Heart right ventricle (tissue), 16 donors: ENCODE measurements at regions of chr1 and their contacts with region 1.

Region 1: GRCh38 chr1:26787706-26788514 is at the start of gene PIGV:
- DNase-seq: peak; percentile 87 to 92
- ATAC-seq: peak; percentile 86 to 92 (median 90)
- H3K4me3 ChIP-seq: peak within 1 kb of the TSS; percentile 57 to 83 (median 70)
- H3K27ac ChIP-seq: peak within 1 kb of the TSS; percentile 97 to 100 (median 99)
- H3K4me1 ChIP-seq: peaks cover 25 to 84% (median 74%) of the 10 kb centered on the region in 9 donors
- H3K27me3 ChIP-seq: no peaks in the 10 kb centered on the region
- CTCF ChIP-seq: peak in 3 of 9 donors; percentile 6 to 27 (median 24)
- total RNA-seq, gene PIGV: 2.7 to 7.5 (median 4.6) TPM

Region 2: GRCh38 chr1:26555550-26556510 is 232.1 kb before region 1 on chr1:
- intact Hi-C with region 1: no loop called
- DNase-seq: no peak
- ATAC-seq: peak in 2 of 8 donors; percentile 37 to 53
- H3K4me3 ChIP-seq: no peak overlapping the region
- H3K27ac ChIP-seq: no peak overlapping the region
- H3K4me1 ChIP-seq: peaks cover 0 to 25% (median 0%) of the 10 kb centered on the region in 9 donors
- H3K27me3 ChIP-seq: no peaks in the 10 kb centered on the region
- CTCF ChIP-seq: no peak

Region 3: GRCh38 chr1:26602378-26602959 is 185.4 kb before region 1 on chr1:
- intact Hi-C with region 1: loop called (anchors 1 to 2 kb)
- DNase-seq: peak in 1 of 2 donors; percentile 70
- ATAC-seq: peak in 3 of 8 donors; percentile 46 to 54 (median 52)
- H3K4me3 ChIP-seq: no peak overlapping the region
- H3K27ac ChIP-seq: no peak overlapping the region
- H3K4me1 ChIP-seq: peaks cover 0 to 8% (median 5%) of the 10 kb centered on the region in 9 donors
- H3K27me3 ChIP-seq: no peaks in the 10 kb centered on the region
- CTCF ChIP-seq: peak; percentile 77 to 95 (median 87)

Region 4: GRCh38 chr1:26695356-26696118 is 92.4 kb before region 1 on chr1 and contains the start of gene ARID1A:
- intact Hi-C with region 1: loop called in 9 of 10 experiments (anchors 1 to 10 kb)
- DNase-seq: peak; percentile 95 to 97
- ATAC-seq: peak; percentile 71 to 82 (median 76)
- H3K4me3 ChIP-seq: peak within 1 kb of the TSS; percentile 72 to 96 (median 92)
- H3K27ac ChIP-seq: peak within 1 kb of the TSS; percentile 93 to 99 (median 98)
- H3K4me1 ChIP-seq: peaks cover 14 to 73% (median 52%) of the 10 kb centered on the region in 9 donors
- H3K27me3 ChIP-seq: no peaks in the 10 kb centered on the region
- CTCF ChIP-seq: peak in 4 of 9 donors; percentile 3 to 39 (median 20)
- total RNA-seq, gene ARID1A: 33.6 to 62.5 (median 45.7) TPM

Region 5: GRCh38 chr1:26723013-26723991 is 64.6 kb before region 1 on chr1:
- intact Hi-C with region 1: loop called in 1 of 10 experiments (anchors 2 kb)
- DNase-seq: peak; percentile 74 to 95
- ATAC-seq: peak; percentile 97 to 99 (median 97)
- H3K4me3 ChIP-seq: peak overlapping the region in 6 of 10 donors; percentile 4 to 25 (median 7)
- H3K27ac ChIP-seq: peak overlapping the region in 9 of 10 donors; percentile 43 to 69 (median 62)
- H3K4me1 ChIP-seq: peaks cover 24 to 100% (median 94%) of the 10 kb centered on the region in 9 donors
- H3K27me3 ChIP-seq: no peaks in the 10 kb centered on the region
- CTCF ChIP-seq: peak in 1 of 9 donors; percentile 8

Region 6: GRCh38 chr1:26744075-26744959 is 43.6 kb before region 1 on chr1:
- intact Hi-C with region 1: loop called in 3 of 10 experiments (anchors 2 to 5 kb)
- DNase-seq: peak; percentile 56 to 92
- ATAC-seq: peak; percentile 93 to 98 (median 96)
- H3K4me3 ChIP-seq: peak overlapping the region in 5 of 10 donors; percentile 0 to 23 (median 15)
- H3K27ac ChIP-seq: peak overlapping the region; percentile 58 to 92 (median 78)
- H3K4me1 ChIP-seq: peaks cover 8 to 92% (median 88%) of the 10 kb centered on the region in 9 donors
- H3K27me3 ChIP-seq: no peaks in the 10 kb centered on the region
- CTCF ChIP-seq: no peak

Region 7: GRCh38 chr1:26768755-26769154 is 19.2 kb before region 1 on chr1:
- intact Hi-C with region 1: no loop called
- DNase-seq: peak in 1 of 2 donors; percentile 59
- ATAC-seq: peak in 6 of 8 donors; percentile 33 to 67 (median 62)
- H3K4me3 ChIP-seq: no peak overlapping the region
- H3K27ac ChIP-seq: peak overlapping the region in 5 of 10 donors; percentile 17 to 67 (median 41)
- H3K4me1 ChIP-seq: peaks cover 3 to 50% (median 38%) of the 10 kb centered on the region in 9 donors
- H3K27me3 ChIP-seq: no peaks in the 10 kb centered on the region
- CTCF ChIP-seq: no peak

Region 8: GRCh38 chr1:26853156-26853555 is 65.2 kb after region 1 on chr1:
- intact Hi-C with region 1: no loop called
- DNase-seq: peak; percentile 80 to 84
- ATAC-seq: peak; percentile 82 to 91 (median 86)
- H3K4me3 ChIP-seq: no peak overlapping the region
- H3K27ac ChIP-seq: no peak overlapping the region
- H3K4me1 ChIP-seq: peaks cover 0 to 5% (median 0%) of the 10 kb centered on the region in 9 donors
- H3K27me3 ChIP-seq: no peaks in the 10 kb centered on the region
- CTCF ChIP-seq: peak; percentile 54 to 88 (median 84)